Naive thymus-derived CD4-positive, alpha-beta T cell (primary cell): ENCODE measurements at regions of chr3 and their contacts with region 1.

Region 1: DNA sequence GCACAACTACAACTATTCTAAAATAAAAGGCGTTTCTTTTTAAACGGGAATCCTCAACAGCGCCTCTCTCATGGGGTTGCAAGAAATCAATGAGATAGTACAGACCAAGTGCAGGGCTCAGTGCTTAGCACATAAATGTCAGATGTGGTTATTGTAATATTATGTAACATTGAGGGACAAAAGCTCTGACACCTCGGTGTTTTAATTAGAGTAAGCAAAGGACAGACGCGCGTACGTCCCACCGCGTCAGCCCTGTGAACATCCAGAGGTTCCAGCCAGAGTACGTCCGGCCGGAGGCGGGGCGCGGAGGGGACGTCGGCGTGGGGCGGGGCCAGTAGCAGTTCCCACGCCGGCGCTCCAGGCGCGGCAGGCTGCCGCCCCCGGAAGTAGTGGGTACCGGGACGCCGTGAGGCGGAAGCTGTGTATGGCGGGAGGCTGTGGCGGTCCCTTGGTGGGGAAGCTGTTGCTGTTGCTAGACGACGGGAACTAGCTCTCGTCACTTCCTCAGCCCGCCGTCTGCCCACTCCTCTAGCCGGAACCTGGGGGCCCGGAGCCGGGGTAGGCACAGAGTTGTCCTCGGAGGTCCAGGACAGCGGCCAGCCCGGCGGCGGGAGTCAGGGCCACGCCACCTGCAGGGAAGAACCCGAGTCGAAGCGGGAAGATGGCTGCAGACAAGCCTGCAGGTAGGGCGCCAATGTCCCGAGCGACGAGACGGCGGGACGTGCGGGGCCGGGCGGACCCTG is at the start of gene CNOT10:
- DNase-seq: peak; percentile 93 to 96 (median 95)
- ATAC-seq: peak; percentile 97
- H3K4me3 ChIP-seq: peak within 1 kb of the TSS; percentile 63
- H3K4me3 Mint-ChIP-seq: peak within 1 kb of the TSS; percentile 82 to 94 (median 92)
- H3K27ac ChIP-seq: peak within 1 kb of the TSS; percentile 86
- H3K27ac Mint-ChIP-seq: peak within 1 kb of the TSS; percentile 91 to 97 (median 96)
- H3K4me1 ChIP-seq: peaks cover 17 to 21% of the 10 kb centered on the region in 2 donors
- H3K4me1 Mint-ChIP-seq: peaks cover 25 to 44% (median 40%) of the 10 kb centered on the region in 7 donors
- H3K27me3 ChIP-seq: no peaks in the 10 kb centered on the region
- H3K27me3 Mint-ChIP-seq: peaks cover 0 to 5% (median 0%) of the 10 kb centered on the region in 5 donors
- total RNA-seq, gene CNOT10: 37.9 to 69.4 (median 46.9) TPM

Region 2: DNA sequence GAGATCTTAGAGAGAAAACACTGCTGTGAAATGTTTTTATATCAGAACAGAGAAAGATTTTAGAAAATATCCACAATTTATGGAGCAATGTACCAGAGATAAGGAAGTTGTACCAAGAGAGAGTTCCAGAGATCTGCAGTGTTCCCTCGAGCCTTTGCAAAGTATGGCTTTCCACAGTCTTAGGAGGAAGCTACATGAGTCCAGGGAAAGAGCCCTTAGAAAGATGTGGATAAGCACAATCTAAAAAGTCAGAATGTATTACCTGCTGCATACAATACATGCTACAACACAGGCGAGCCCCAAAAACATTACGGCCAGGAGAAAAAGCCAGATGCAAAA is 647.1 kb before region 1 on chr3:
- CTCF ChIA-PET with region 1: no interaction called
- POLR2A ChIA-PET with region 1: no interaction called
- intact Hi-C with region 1: no loop called
- DNase-seq: no peak
- ATAC-seq: no peak
- H3K4me3 ChIP-seq: no peak overlapping the region
- H3K4me3 Mint-ChIP-seq: no peak overlapping the region
- H3K27ac ChIP-seq: no peak overlapping the region
- H3K27ac Mint-ChIP-seq: no peak overlapping the region
- H3K4me1 ChIP-seq: no peaks in the 10 kb centered on the region
- H3K4me1 Mint-ChIP-seq: no peaks in the 10 kb centered on the region
- H3K27me3 ChIP-seq: no peaks in the 10 kb centered on the region
- H3K27me3 Mint-ChIP-seq: peaks cover 0 to 16% (median 4%) of the 10 kb centered on the region in 5 donors

Region 3: DNA sequence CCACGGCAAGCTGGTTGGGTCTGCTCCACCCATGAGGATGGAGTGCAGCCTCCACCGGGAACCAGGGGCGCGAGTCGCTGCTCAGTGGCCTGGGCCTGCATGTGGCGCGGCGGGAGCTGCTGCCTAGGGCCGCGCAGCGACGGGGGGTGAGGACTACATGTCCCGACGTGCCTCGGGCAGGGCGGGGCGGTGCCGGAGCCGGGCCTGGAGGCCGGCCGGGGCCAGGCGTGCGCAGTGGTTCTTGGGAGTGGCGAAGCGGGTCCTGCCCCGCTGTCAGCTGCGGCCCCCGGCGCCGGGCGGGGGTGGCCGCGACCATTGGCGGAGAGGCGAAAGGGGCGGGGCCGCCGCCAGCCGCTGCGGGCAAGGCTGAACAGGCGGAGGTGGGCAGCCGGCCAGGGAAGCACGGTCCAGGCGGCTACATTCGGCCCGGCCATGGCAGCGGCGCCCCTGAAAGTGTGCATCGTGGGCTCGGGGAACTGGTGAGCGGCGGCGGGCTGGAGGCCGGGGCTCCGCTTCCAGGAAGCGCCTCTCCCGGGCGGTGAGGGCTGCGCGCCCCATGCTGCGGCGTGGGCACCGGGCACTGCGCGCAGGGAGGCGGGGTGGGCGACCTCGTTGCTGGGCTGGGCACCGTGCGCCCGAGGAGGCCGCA is 578.6 kb before region 1 on chr3 and contains the start of gene GPD1L:
- CTCF ChIA-PET with region 1: no interaction called
- POLR2A ChIA-PET with region 1: no interaction called
- intact Hi-C with region 1: loop called (anchors 1 kb)
- DNase-seq: peak; percentile 75 to 96 (median 86)
- ATAC-seq: peak; percentile 99
- H3K4me3 ChIP-seq: peak within 1 kb of the TSS; percentile 77
- H3K4me3 Mint-ChIP-seq: peak within 1 kb of the TSS; percentile 86 to 97 (median 94)
- H3K27ac ChIP-seq: peak within 1 kb of the TSS; percentile 68
- H3K27ac Mint-ChIP-seq: peak within 1 kb of the TSS; percentile 77 to 96 (median 82)
- H3K4me1 ChIP-seq: peaks cover 14 to 15% of the 10 kb centered on the region in 2 donors
- H3K4me1 Mint-ChIP-seq: peaks cover 14 to 44% (median 39%) of the 10 kb centered on the region in 7 donors
- H3K27me3 ChIP-seq: no peaks in the 10 kb centered on the region
- H3K27me3 Mint-ChIP-seq: no peaks in the 10 kb centered on the region
- total RNA-seq, gene GPD1L: 14.1 to 23.8 (median 21.4) TPM

Region 4: DNA sequence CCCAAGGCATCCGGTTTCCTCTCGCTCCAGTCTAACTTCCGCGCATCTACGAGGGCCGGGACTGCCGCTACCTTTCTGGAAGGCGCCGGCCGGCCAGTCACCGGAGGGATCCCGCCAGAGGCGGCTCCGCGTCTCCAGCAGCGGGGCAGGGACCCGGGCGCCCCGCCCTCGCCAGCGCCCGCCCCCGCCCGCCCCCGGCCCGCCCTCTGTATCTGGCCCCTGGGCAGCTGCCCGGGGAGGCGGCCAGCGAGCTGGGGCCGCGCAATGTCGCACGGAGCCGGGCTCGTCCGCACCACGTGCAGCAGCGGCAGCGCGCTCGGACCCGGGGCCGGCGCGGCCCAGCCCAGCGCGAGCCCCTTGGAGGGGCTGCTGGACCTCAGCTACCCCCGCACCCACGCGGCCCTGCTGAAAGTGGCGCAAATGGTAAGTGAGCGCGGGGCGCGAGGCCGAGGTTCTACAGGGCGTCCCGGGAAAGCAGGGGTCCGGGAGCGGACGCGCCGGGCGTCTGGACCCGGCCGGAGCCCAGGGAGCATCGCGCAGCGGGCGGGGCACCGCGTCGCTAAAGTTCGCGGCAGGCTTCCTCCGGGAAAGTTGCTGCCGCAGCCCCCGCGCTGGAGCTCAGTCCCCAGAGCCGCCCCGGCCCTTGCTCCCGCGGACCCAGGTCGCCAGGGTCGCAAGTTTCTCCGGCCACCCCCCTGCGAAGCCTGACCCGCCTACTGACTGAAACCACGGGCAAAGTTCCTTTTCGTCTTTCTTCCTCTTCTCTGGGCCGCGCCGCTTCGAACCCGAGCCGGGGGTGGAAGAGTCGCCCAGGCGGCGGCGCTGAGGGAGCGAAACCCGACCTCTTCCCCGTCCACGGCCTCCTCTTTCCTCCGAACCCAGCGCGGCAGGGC is 293.1 kb before region 1 on chr3 and contains the start of gene CMTM7:
- CTCF ChIA-PET with region 1: no interaction called
- POLR2A ChIA-PET with region 1: interaction called, 3 read pairs
- intact Hi-C with region 1: loop called (anchors 5 to 10 kb)
- DNase-seq: peak; percentile 33 to 68 (median 62)
- ATAC-seq: peak; percentile 75
- H3K4me3 ChIP-seq: peak within 1 kb of the TSS; percentile 81
- H3K4me3 Mint-ChIP-seq: peak within 1 kb of the TSS; percentile 84 to 99 (median 98)
- H3K27ac ChIP-seq: peak within 1 kb of the TSS; percentile 83
- H3K27ac Mint-ChIP-seq: peak within 1 kb of the TSS; percentile 93 to 100 (median 98)
- H3K4me1 ChIP-seq: peaks cover 17 to 25% of the 10 kb centered on the region in 2 donors
- H3K4me1 Mint-ChIP-seq: peaks cover 30 to 70% (median 55%) of the 10 kb centered on the region in 7 donors
- H3K27me3 ChIP-seq: no peaks in the 10 kb centered on the region
- H3K27me3 Mint-ChIP-seq: no peaks in the 10 kb centered on the region
- total RNA-seq, gene CMTM7: 38.6 to 60.1 (median 49.5) TPM

Region 5: GRCh38 chr3:32570421-32571191 is 114.4 kb before region 1 on chr3 and contains the start of gene DYNC1LI1:
- CTCF ChIA-PET with region 1: interaction called, 6 read pairs
- POLR2A ChIA-PET with region 1: interaction called, 3 read pairs
- intact Hi-C with region 1: loop called (anchors 1 kb)
- DNase-seq: peak; percentile 81 to 96 (median 88)
- ATAC-seq: peak; percentile 98
- H3K4me3 ChIP-seq: peak within 1 kb of the TSS; percentile 68
- H3K4me3 Mint-ChIP-seq: peak within 1 kb of the TSS; percentile 84 to 96 (median 92)
- H3K27ac ChIP-seq: peak within 1 kb of the TSS; percentile 90
- H3K27ac Mint-ChIP-seq: peak within 1 kb of the TSS; percentile 71 to 93 (median 86)
- H3K4me1 ChIP-seq: peaks cover 5 to 17% of the 10 kb centered on the region in 2 donors
- H3K4me1 Mint-ChIP-seq: peaks cover 0 to 39% (median 31%) of the 10 kb centered on the region in 7 donors
- H3K27me3 ChIP-seq: no peaks in the 10 kb centered on the region
- H3K27me3 Mint-ChIP-seq: no peaks in the 10 kb centered on the region
- total RNA-seq, gene DYNC1LI1: 26.1 to 28.5 (median 27.5) TPM

Region 6: DNA sequence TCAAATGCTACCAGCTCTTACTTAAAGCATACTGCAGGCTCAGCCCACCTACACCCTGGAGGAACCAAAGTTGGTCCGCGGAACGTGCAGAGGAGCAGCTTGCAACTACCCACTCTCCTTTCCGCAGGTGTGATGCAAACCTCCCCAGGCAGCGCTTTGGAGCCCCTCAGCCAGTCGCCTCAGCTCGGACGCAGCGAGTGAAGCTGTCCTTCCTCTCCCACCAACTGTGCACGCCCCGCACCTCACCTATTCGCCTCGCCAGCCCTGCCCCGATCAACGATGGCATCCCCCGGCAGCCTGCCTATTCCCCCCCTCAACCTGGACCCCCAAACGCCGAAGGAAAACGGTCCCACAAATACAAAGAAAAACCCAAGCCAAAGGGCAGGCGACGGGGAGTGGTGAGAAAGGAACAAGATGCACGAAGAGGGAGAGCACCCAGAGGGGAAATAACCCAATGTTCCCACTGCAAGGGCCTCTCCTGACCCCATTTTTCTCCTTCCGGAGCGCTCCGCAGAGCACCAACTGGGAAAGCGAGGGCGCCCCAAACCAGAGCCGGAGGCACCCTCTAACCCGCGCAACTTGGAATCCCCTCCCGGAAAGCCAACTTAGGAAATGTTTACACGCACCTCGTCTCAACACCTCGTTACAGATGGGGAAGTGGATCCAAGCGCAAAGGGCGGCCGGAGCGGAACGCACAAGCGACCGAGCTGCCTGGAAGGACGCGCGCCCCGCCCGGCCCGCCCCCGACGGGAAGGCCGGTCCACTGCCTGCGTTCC is 411.3 kb after region 1 on chr3:
- CTCF ChIA-PET with region 1: no interaction called
- POLR2A ChIA-PET with region 1: no interaction called
- intact Hi-C with region 1: loop called in 1 of 2 experiments (anchors 2 kb)
- DNase-seq: peak in 8 of 9 donors; percentile 23 to 52 (median 39)
- ATAC-seq: peak; percentile 71
- H3K4me3 ChIP-seq: peak overlapping the region; percentile 90
- H3K4me3 Mint-ChIP-seq: peak overlapping the region; percentile 90 to 98 (median 94)
- H3K27ac ChIP-seq: peak overlapping the region; percentile 71
- H3K27ac Mint-ChIP-seq: peak overlapping the region; percentile 66 to 87 (median 80)
- H3K4me1 ChIP-seq: peaks cover 0 to 17% of the 10 kb centered on the region in 2 donors
- H3K4me1 Mint-ChIP-seq: peaks cover 24 to 45% (median 37%) of the 10 kb centered on the region in 7 donors
- H3K27me3 ChIP-seq: no peaks in the 10 kb centered on the region
- H3K27me3 Mint-ChIP-seq: peaks cover 0 to 4% (median 0%) of the 10 kb centered on the region in 5 donors

Region 7: DNA sequence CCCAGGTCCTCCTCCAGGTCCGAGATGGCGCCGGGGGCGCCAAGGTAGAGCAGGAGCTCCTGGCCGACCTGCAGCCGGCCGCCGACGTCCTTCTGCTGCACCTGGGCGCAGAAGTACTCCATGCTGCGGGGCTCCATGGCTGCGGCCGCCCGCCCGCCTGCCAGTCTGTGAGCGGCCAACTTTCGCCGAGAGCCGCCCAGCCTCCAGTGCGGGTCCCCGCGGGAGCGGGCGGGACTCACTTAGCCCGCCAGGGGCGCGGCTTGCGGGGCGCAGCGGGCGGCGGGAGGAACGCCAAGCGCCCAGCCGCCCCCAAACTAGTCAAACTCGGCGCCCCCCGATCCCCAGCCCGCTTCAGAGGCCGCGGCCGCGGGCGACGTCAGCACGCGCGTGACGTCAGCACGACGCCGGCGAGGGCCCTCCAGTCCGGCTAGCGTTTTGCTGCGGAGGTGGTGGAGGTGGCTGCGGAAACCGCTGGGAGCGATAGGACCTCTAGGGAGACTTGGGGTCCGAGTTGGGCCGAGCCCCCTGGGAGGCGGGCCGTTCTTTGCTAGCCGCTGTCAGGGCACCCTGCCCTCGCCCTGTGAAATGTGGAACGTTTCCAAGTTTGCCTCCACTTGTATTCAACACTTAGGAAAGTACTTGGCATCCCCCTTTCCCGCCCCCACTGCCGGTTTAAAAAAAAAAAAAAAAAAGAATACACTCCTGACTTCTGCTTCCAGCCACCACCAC is 1033.1 kb after region 1 on chr3 and contains the start of gene CLASP2:
- CTCF ChIA-PET with region 1: no interaction called
- POLR2A ChIA-PET with region 1: no interaction called
- intact Hi-C with region 1: loop called in 1 of 2 experiments (anchors 1 kb)
- DNase-seq: peak; percentile 77 to 89 (median 86)
- ATAC-seq: peak; percentile 90
- H3K4me3 ChIP-seq: peak within 1 kb of the TSS; percentile 81
- H3K4me3 Mint-ChIP-seq: peak within 1 kb of the TSS in 5 of 10 donors; percentile 89 to 99 (median 97)
- H3K27ac ChIP-seq: peak within 1 kb of the TSS; percentile 91
- H3K27ac Mint-ChIP-seq: peak within 1 kb of the TSS in 7 of 9 donors; percentile 90 to 100 (median 97)
- H3K4me1 ChIP-seq: peaks cover 11 to 17% of the 10 kb centered on the region in 2 donors
- H3K4me1 Mint-ChIP-seq: peaks cover 0 to 17% (median 11%) of the 10 kb centered on the region in 7 donors
- H3K27me3 ChIP-seq: no peaks in the 10 kb centered on the region
- H3K27me3 Mint-ChIP-seq: peaks cover 0 to 10% (median 0%) of the 10 kb centered on the region in 5 donors
- total RNA-seq, gene CLASP2: 44.2 to 83.8 (median 79.2) TPM